ENCODE measurements at regions of chr3 and their contacts with region 1.

Region 1: DNA sequence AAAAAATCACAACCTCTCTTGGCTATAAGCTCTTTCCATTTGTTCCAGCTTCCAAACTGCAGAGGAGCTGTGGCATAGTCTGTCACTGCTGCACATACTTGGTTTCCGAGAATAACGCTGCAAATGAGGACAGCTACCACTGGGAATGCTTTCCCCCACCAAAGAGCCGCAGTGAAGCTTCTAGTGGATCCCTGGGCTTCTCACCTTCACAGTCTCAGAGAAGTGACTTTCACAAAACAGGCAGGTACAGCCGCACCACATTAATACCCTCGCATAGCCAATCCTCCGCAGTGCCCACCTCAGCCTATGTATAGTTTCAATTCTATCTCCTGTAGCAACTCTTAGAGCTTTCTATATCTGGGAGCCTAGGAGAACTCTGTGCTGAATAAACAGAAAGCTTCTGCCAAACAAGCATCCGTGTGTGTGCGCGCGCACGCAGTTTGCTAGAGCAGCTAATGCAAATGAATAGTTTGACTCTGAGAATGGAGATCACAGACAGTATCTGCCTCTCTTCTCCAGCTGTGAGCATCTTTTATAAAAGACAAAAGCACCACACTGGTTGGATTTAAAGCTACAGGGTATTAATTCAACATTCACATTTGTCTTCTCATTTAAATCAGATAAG is 81.9 kb upstream of the PLXND1 start:
- DNase-seq: peak; percentile 69 to 81
- ATAC-seq: peak; percentile 62 to 78 (median 66)
- H3K4me3 ChIP-seq: peak overlapping the region; percentile 62
- H3K27ac ChIP-seq: peak overlapping the region; percentile 81
- H3K4me1 ChIP-seq: peaks cover 51% of the 10 kb centered on the region
- H3K27me3 ChIP-seq: no peaks in the 10 kb centered on the region
- CTCF ChIP-seq: no peak

Region 2: DNA sequence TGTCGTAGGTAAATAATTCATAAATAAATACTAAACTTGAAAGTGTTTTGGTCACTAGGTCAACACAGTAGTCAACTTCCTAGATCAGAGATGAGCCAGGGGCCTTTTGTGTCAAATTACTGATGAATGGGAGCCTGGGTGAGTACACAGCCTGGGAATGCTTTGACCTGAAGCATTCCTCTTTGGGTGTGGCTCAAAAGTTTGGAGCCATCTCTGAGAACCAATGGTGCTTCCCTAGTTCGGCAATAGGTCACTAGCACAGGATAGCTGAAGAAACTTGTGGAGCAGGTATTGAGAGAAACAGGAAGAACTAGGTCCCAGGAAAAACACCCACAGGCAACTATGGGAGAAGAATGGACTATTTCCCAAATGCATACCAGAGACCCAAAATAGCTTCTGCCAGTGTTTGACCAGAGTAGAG is 25.3 kb before region 1 on chr3:
- intact Hi-C with region 1: loop called in 1 of 2 experiments (anchors 2 kb)
- DNase-seq: no peak
- ATAC-seq: peak; percentile 30 to 56 (median 46)
- H3K4me3 ChIP-seq: peak overlapping the region; percentile 52
- H3K27ac ChIP-seq: peak overlapping the region; percentile 94
- H3K4me1 ChIP-seq: peaks cover 60% of the 10 kb centered on the region
- H3K27me3 ChIP-seq: no peaks in the 10 kb centered on the region
- CTCF ChIP-seq: no peak

Measured in psoas muscle (tissue), 8 donors.